ENCODE measurements at regions of chr2 and their contacts with region 1.

Region 1: DNA sequence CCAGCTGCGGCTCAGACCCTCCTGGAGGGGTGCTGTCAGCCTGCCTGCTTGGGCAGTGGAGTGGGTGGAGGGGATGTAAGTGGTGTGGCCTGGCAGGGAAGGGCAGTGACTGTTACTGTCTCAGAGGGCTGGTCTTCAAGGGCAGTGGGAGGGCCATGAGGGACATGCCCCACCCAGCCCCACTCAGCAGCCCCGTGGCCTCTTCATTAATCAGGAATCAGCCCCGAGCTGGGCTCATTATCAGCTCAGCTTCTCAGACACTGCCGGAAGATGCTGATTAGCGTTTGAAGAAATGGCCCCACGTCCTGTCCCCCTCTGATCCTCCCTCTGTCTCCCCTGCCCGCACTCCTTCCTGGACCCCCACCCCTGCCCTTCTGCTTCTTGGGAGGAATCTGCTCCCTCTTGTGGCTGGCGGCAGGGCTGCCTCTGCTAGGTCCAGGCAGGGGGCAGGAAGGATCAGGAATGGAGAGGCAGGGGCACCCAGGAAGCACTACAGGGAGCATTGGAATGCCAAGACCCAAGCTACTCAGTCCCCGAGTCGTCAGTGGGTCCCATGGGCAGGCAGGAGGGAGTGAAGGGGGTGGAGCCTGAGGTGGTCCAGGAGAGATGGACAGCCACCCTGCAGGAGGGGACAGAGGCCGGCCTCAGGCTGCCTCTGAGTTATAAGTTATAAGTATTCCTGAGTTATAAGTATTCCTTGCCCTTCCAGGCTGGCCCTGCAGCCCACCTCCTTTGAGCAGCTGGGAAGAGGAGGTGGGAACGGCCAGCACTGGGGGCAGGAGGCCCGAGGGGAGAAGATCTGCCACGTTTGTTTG is 7.0 kb downstream of the ASIC4 start:
- DNase-seq: peak in 2 of 10 donors; percentile 66 to 86

Region 2: DNA sequence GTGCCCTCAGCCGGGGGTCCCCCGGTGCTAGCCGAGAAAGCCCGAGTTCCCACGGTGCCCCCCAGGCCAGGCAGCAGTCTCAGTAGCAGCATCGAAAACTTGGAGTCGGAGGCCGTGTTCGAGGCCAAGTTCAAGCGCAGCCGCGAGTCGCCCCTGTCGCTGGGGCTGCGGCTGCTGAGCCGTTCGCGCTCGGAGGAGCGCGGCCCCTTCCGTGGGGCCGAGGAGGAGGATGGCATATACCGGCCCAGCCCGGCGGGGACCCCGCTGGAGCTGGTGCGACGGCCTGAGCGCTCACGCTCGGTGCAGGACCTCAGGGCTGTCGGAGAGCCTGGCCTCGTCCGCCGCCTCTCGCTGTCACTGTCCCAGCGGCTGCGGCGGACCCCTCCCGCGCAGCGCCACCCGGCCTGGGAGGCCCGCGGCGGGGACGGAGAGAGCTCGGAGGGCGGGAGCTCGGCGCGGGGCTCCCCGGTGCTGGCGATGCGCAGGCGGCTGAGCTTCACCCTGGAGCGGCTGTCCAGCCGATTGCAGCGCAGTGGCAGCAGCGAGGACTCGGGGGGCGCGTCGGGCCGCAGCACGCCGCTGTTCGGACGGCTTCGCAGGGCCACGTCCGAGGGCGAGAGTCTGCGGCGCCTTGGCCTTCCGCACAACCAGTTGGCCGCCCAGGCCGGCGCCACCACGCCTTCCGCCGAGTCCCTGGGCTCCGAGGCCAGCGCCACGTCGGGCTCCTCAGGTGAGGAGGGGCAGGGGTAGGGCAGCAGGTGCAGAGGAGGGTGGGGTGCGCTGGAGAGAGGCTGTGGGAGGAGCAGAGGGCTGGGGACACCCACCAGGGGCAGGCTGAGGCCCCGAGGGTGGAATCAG is 36.7 kb before region 1 on chr2:
- intact Hi-C with region 1: loop called (anchors 5 kb)
- DNase-seq: no peak

Region 3: DNA sequence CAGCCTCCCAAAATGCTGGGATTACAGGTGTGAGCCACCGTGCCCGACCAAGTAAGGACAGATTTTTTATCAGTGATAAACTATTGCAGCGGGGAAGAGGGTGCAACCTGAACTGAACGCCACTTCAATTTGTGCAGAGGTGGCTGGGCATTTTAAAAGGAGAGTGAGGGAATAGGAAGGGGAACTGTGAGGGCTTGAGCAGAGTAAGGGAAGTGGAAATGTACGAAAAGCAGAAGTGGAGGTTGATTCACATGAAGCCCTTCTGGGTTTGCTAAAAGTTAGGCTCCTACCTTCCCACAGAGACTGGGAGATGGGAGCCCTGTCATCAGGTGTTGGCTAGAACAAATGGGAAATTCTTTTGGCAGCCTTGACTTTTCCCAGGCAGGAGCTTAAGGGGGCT is 82.5 kb after region 1 on chr2:
- intact Hi-C with region 1: no loop called
- DNase-seq: peak in 1 of 10 donors; percentile 7

Measured in posterior cingulate gyrus (tissue), 11 donors.